Cardiac septum (tissue), 1 donor: ENCODE measurements at regions of chr1 and their contacts with region 1.

Region 1: GRCh38 chr1:26874896-26875295 is 11.9 kb downstream of the SFN start:
- DNase-seq: no peak

Region 2: GRCh38 chr1:26602378-26602959 is 272.4 kb before region 1 on chr1:
- intact Hi-C with region 1: loop called (anchors 5 kb)
- DNase-seq: no peak

Region 3: GRCh38 chr1:26811057-26811456 is 63.8 kb before region 1 on chr1:
- intact Hi-C with region 1: loop called (anchors 5 kb)
- DNase-seq: no peak

Region 4: DNA sequence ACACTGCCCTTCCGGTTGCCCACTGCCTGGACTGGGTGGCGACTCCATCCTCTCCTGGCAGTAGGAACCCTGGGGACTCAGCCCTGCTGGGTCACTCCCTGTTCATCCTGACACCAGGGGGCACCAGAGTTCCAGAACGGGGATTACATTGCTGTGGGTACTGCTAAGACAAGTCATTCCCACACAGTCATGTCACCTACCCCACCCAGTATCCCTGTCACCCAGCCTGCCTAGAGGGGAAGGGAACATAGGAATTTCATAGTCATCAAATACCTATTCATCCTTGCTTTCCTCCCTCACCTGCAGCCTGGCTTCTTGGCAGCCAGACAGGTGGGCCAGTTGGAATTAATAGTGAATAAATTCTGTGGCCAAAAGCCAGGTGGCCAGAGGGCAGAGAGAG is 21.7 kb before region 1 on chr1:
- intact Hi-C with region 1: loop called (anchors 1 kb)
- DNase-seq: peak; percentile 92